T-cell (primary cell): ENCODE measurements at regions of chr6 and their contacts with region 1.

Region 1: GRCh38 chr6:27809939-27810767 is 102.0 kb downstream of the OR2B2 start:
- DNase-seq: peak; percentile 60 to 94 (median 73)
- ATAC-seq: peak; percentile 61 to 66 (median 62)
- H3K4me3 ChIP-seq: peak overlapping the region; percentile 62 to 68
- H3K4me3 Mint-ChIP-seq: peak overlapping the region; percentile 87 to 94 (median 90)
- H3K27ac ChIP-seq: peak overlapping the region; percentile 81
- H3K27ac Mint-ChIP-seq: peak overlapping the region; percentile 95 to 98
- H3K4me1 ChIP-seq: peaks cover 38% of the 10 kb centered on the region in 2 experiments
- H3K4me1 Mint-ChIP-seq: peaks cover 48 to 61% (median 52%) of the 10 kb centered on the region in 3 donors
- H3K27me3 ChIP-seq: no peaks in the 10 kb centered on the region
- H3K27me3 Mint-ChIP-seq: no peaks in the 10 kb centered on the region

Region 2: GRCh38 chr6:26457806-26458688 is 1352.1 kb before region 1 on chr6 and contains the start of gene BTN2A1:
- CTCF ChIA-PET with region 1: no interaction called
- POLR2A ChIA-PET with region 1: no interaction called
- DNase-seq: peak; percentile 35 to 90 (median 58)
- ATAC-seq: peak; percentile 94 to 99 (median 96)
- H3K4me3 ChIP-seq: peak within 1 kb of the TSS; percentile 72 to 91
- H3K4me3 Mint-ChIP-seq: peak within 1 kb of the TSS; percentile 97 to 99 (median 98)
- H3K27ac ChIP-seq: peak within 1 kb of the TSS; percentile 69
- H3K27ac Mint-ChIP-seq: peak within 1 kb of the TSS; percentile 96 to 98
- H3K4me1 ChIP-seq: peaks cover 10 to 43% of the 10 kb centered on the region in 2 experiments
- H3K4me1 Mint-ChIP-seq: peaks cover 61 to 73% (median 66%) of the 10 kb centered on the region in 3 donors
- H3K27me3 ChIP-seq: no peaks in the 10 kb centered on the region
- H3K27me3 Mint-ChIP-seq: no peaks in the 10 kb centered on the region
- total RNA-seq, gene BTN2A1: 36.1 to 53.4 (median 47.9) TPM

Region 3: DNA sequence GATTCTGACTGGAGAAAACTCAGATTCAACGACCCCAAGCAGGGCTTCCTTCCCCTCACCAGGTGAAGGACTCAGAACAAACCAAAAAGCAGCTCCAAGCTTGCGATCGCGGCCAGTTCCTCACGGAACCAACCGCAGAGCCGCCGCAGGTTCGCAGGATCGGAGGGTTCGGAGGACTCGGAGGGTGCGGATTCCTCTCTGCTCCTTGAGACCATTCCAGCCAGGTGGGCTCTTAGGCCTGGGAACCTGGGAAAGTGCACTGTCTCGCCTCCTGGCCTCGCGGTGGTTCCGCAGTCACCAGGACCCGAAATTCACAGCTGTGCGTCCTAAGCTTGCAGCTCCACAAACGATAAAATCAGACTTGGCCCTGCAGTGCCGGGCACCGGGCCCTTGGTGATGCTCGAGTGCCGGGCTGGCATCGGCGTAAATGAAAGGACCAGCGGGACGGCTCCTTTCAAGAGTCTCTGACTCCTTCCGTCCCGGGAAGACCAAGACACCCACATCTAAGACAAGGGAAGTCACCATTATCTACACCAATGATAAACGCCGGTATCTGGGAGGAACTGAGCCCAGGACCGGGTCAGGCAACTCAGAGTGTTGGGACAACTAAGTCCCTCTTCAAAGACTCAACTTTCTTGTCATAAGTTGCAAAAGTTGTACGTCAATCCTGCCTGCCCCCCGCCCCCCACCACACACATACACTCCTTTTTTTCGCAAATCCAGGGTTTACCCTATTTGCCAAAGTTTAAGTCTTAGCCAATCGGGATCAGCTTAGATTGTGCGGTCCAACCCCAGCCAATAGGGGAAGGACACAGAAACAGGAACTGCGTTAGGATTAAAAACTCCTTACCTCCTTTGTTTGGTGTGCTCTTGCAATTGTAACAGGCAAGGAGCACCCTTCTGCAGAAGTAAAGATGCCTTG is 632.4 kb before region 1 on chr6:
- CTCF ChIA-PET with region 1: interaction called in 1 of 2 experiments, 3 read pairs
- POLR2A ChIA-PET with region 1: interaction called, 8 to 10 read pairs
- DNase-seq: peak; percentile 35 to 83 (median 58)
- ATAC-seq: peak; percentile 68 to 88 (median 76)
- H3K4me3 ChIP-seq: peak overlapping the region; percentile 77 to 100
- H3K4me3 Mint-ChIP-seq: peak overlapping the region; percentile 92 to 96 (median 96)
- H3K27ac ChIP-seq: peak overlapping the region; percentile 55
- H3K27ac Mint-ChIP-seq: peak overlapping the region; percentile 88 to 91
- H3K4me1 ChIP-seq: peaks cover 2 to 16% of the 10 kb centered on the region in 2 experiments
- H3K4me1 Mint-ChIP-seq: peaks cover 7 to 22% (median 15%) of the 10 kb centered on the region in 3 donors
- H3K27me3 ChIP-seq: peaks cover 0 to 3% of the 10 kb centered on the region in 2 experiments
- H3K27me3 Mint-ChIP-seq: peaks cover 4 to 5% of the 10 kb centered on the region in 2 donors

Region 4: DNA sequence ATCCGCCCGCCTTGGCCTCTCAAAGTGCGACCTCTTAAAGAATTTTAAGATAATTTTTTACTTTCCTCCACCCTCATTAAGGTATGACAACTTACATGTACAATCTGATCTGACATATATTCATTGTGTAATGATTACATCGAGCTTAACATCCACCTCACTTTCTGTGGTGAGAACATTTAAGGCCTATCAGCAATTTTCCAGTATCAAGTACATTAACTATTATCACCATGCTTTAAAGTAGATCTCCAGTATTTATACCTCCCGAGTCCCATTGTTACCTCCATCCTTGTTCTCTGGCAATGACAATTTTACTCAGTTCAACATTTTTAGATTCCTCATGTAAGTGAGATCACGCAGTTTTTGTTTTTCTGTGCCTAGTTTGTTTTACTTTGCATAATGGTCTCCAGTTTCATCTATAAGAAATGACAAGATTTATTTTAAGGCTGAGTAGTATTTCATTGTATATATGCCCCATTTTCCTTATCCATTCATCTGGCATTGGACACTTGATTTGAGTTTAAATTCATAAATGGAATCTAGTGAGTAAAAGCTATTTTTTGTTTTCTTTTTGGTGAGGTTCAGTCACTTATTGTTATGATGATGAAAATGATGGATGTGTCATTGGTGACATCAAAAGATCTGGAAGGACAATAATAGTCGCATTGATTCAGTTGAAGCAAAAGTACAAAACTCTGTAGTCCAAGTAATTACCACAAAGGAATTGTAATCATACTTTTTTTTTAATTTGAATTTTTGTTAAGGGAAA is 15.1 kb after region 1 on chr6:
- CTCF ChIA-PET with region 1: interaction called, 3 to 16 read pairs
- POLR2A ChIA-PET with region 1: interaction called, 6 to 23 read pairs
- DNase-seq: peak in 1 of 35 experiments; percentile 39
- ATAC-seq: no peak
- H3K4me3 ChIP-seq: peak overlapping the region; percentile 61 to 92
- H3K4me3 Mint-ChIP-seq: peak overlapping the region; percentile 80 to 90 (median 87)
- H3K27ac ChIP-seq: peak overlapping the region; percentile 89
- H3K27ac Mint-ChIP-seq: peak overlapping the region; percentile 89 to 96
- H3K4me1 ChIP-seq: peaks cover 6 to 12% of the 10 kb centered on the region in 2 experiments
- H3K4me1 Mint-ChIP-seq: peaks cover 36 to 39% (median 38%) of the 10 kb centered on the region in 3 donors
- H3K27me3 ChIP-seq: no peaks in the 10 kb centered on the region
- H3K27me3 Mint-ChIP-seq: no peaks in the 10 kb centered on the region

Region 5: DNA sequence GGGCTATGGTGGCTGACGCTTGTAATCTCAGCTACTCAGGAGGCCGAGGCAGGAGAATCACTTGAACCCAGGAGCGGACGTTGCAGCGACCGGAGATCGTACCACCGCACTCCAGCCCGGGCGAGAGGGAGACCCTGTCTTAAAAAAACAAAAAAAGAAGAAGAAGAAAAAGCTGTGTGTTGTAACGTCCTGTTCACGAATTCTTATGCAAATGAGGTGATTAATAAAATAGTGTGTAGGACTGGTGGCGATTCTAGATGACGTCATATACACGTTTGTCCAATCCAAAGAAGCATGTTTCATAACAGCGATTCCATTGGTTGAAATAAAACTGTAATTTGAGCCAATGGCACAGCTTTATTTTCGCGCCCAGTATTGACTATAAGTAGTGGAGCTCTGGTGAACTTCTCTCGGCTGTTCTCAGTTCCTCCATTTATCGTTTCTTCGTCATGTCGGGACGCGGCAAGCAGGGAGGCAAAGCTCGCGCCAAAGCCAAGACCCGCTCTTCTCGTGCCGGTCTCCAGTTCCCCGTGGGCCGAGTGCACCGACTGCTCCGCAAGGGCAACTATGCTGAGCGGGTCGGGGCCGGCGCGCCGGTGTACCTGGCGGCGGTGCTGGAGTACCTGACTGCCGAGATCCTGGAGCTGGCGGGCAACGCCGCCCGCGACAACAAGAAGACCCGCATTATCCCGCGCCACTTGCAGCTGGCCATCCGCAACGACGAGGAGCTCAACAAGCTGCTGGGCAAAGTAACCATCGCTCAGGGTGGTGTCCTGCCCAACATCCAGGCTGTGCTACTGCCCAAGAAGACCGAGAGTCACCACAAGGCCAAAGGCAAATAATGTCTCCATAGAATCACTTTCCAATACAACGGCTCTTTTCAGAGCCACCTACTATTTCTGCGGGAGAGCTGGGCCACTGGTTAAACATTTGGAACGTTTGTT is 55.0 kb after region 1 on chr6:
- CTCF ChIA-PET with region 1: interaction called, 9 to 18 read pairs
- POLR2A ChIA-PET with region 1: interaction called, 30 to 117 read pairs
- DNase-seq: peak; percentile 30 to 95 (median 62)
- ATAC-seq: peak; percentile 78 to 85 (median 80)
- H3K4me3 ChIP-seq: peak overlapping the region; percentile 76 to 96
- H3K4me3 Mint-ChIP-seq: peak overlapping the region; percentile 98 to 99 (median 98)
- H3K27ac ChIP-seq: peak overlapping the region; percentile 78
- H3K27ac Mint-ChIP-seq: peak overlapping the region; percentile 89 to 96
- H3K4me1 ChIP-seq: peaks cover 14 to 38% of the 10 kb centered on the region in 2 experiments
- H3K4me1 Mint-ChIP-seq: peaks cover 43 to 48% (median 45%) of the 10 kb centered on the region in 3 donors
- H3K27me3 ChIP-seq: no peaks in the 10 kb centered on the region
- H3K27me3 Mint-ChIP-seq: no peaks in the 10 kb centered on the region